ENCODE measurements at regions of chr6 and their contacts with region 1.

Region 1: DNA sequence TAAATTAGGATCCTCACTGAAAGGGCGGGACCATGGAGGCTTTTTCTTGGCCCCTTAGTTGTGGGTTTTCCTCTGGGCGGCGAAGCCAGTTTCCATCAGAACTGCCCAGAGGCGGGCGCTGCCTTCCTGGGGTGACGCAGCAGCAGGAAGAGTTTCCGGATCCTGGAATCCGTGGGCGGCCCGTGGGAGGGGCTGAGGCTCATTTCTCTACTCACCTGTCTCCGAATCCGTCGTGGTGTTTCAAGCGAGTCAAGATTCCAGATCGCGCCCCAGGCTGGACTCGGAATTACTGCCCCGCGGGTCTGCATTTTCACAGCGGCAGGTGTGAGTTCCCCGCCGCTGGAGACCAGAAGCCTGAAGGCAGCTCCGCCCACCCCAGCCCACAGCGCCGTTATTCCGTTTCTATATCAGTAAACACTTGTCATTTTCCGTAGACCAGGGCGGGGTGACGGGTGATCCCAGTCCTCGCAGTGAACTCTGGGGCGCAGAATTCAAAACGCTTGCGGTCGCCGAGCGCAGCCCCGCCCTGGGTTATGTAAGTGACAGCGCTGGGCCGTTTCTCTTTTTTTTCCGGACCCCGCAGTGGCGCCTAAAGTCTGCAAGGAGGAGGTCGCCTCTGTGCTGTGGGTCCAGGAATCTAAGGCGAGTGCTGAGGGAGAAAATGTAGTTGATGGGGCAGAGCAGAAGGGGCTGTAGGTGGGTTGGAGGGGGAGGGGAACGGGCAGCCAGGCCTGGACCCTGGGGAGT is 27.2 kb upstream of the POU5F1 start:
- DNase-seq: peak; percentile 98
- H3K4me3 Mint-ChIP-seq: peak overlapping the region; percentile 96
- H3K27ac Mint-ChIP-seq: peak overlapping the region; percentile 99
- H3K4me1 Mint-ChIP-seq: peaks cover 61% of the 10 kb centered on the region
- H3K27me3 Mint-ChIP-seq: no peaks in the 10 kb centered on the region

Region 2: DNA sequence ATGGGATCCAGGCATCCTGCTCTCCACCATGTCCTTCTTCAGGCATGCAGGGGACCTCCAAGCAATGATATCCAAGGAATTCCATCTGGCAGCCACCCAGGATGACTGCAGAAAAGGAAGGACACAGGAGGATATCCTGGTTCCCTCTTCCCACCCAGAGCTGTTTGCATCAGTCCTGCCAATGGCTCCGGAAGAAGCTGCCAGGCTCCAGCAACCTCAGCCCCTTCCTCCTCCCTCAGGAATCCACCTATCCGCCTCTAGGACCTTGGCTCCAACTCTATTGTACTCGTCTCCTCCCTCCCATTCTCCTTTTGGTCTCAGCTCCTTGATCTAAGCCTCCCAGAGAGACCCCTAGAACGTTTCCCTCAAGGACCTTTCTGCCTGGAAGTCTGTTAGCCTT is 58.1 kb before region 1 on chr6:
- CTCF ChIA-PET with region 1: interaction called, 46 read pairs
- DNase-seq: no peak
- H3K4me3 Mint-ChIP-seq: no peak overlapping the region
- H3K27ac Mint-ChIP-seq: no peak overlapping the region
- H3K4me1 Mint-ChIP-seq: peaks cover 4% of the 10 kb centered on the region
- H3K27me3 Mint-ChIP-seq: peaks cover 10% of the 10 kb centered on the region

Measured in activated naive CD4-positive, alpha-beta T cell treated with anti-CD3 and anti-CD28 coated beads, Interleukin-2, amount 10 ng/mL, durations not matched to agents 7 days and 5 days (primary cell).